ENCODE measurements at regions of chr14 and their contacts with region 1.

Region 1: GRCh38 chr14:54773171-54773975 is 129.3 kb downstream of the GCH1 start:
- DNase-seq: peak; percentile 84 to 91
- ATAC-seq: peak; percentile 81 to 85 (median 82)
- H3K4me3 ChIP-seq: peak overlapping the region; percentile 1
- H3K27ac ChIP-seq: peak overlapping the region; percentile 88
- H3K4me1 ChIP-seq: peaks cover 73% of the 10 kb centered on the region
- H3K27me3 ChIP-seq: no peaks in the 10 kb centered on the region
- CTCF ChIP-seq: peak; percentile 69

Region 2: GRCh38 chr14:54691525-54692283 is 81.7 kb before region 1 on chr14:
- intact Hi-C with region 1: loop called (anchors 5 kb)
- DNase-seq: peak; percentile 77 to 90
- ATAC-seq: peak; percentile 72 to 81 (median 77)
- H3K4me3 ChIP-seq: no peak overlapping the region
- H3K27ac ChIP-seq: peak overlapping the region; percentile 88
- H3K4me1 ChIP-seq: peaks cover 65% of the 10 kb centered on the region
- H3K27me3 ChIP-seq: no peaks in the 10 kb centered on the region
- CTCF ChIP-seq: peak; percentile 86

Region 3: GRCh38 chr14:54698966-54699530 is 74.3 kb before region 1 on chr14:
- intact Hi-C with region 1: loop called (anchors 5 kb)
- DNase-seq: peak; percentile 52 to 87
- ATAC-seq: peak; percentile 91 to 94 (median 93)
- H3K4me3 ChIP-seq: peak overlapping the region; percentile 47
- H3K27ac ChIP-seq: peak overlapping the region; percentile 88
- H3K4me1 ChIP-seq: peaks cover 81% of the 10 kb centered on the region
- H3K27me3 ChIP-seq: no peaks in the 10 kb centered on the region
- CTCF ChIP-seq: no peak

Region 4: GRCh38 chr14:54737132-54737711 is 36.2 kb before region 1 on chr14:
- intact Hi-C with region 1: loop called (anchors 5 kb)
- DNase-seq: peak in 1 of 2 donors; percentile 48
- ATAC-seq: peak; percentile 46 to 71 (median 58)
- H3K4me3 ChIP-seq: no peak overlapping the region
- H3K27ac ChIP-seq: peak overlapping the region; percentile 65
- H3K4me1 ChIP-seq: peaks cover 32% of the 10 kb centered on the region
- H3K27me3 ChIP-seq: no peaks in the 10 kb centered on the region
- CTCF ChIP-seq: no peak

Region 5: GRCh38 chr14:54818201-54819133 is 45.1 kb after region 1 on chr14:
- intact Hi-C with region 1: no loop called
- DNase-seq: no peak
- ATAC-seq: no peak
- H3K4me3 ChIP-seq: no peak overlapping the region
- H3K27ac ChIP-seq: no peak overlapping the region
- H3K4me1 ChIP-seq: no peaks in the 10 kb centered on the region
- H3K27me3 ChIP-seq: peaks cover 0 to 5% (median 3%) of the 10 kb centered on the region in 3 donors
- CTCF ChIP-seq: no peak

Measured in psoas muscle (tissue), 8 donors.